ENCODE measurements at regions of chr6 and their contacts with region 1.

Region 1: GRCh38 chr6:30678964-30679726 is 6.3 kb upstream of the DHX16 start:
- DNase-seq: no peak
- ATAC-seq: peak; percentile 79
- H3K4me3 ChIP-seq: peak overlapping the region; percentile 100
- H3K27ac ChIP-seq: peak overlapping the region; percentile 65
- H3K4me1 ChIP-seq: peaks cover 8% of the 10 kb centered on the region
- H3K27me3 ChIP-seq: no peaks in the 10 kb centered on the region
- CTCF ChIP-seq: peak; percentile 97 to 98 (median 98); a peak in 5 of 6 replicates
- EP300 ChIP-seq: no peak
- POLR2A ChIP-seq: 0 out of 2 replicates have a peak, but pooled peaks have one; percentile 29
- RAD21 ChIP-seq: peak; percentile 97

Region 2: GRCh38 chr6:30711758-30712380 is 32.7 kb after region 1 on chr6:
- CTCF ChIA-PET with region 1: interaction called, 487 read pairs
- POLR2A ChIA-PET with region 1: interaction called, 200 read pairs
- RAD21 ChIA-PET with region 1: interaction called, 209 read pairs
- SMC1A ChIA-PET with region 1: interaction called, 265 read pairs
- in situ Hi-C with region 1: loop called (anchors 5 kb)
- intact Hi-C with region 1: loop called (anchors 1 kb)
- DNase-seq: no peak
- ATAC-seq: peak; percentile 79
- H3K4me3 ChIP-seq: peak overlapping the region; percentile 0; the same call in 1 of the 2 replicates
- H3K27ac ChIP-seq: peak overlapping the region; percentile 35
- H3K4me1 ChIP-seq: peaks cover 32% of the 10 kb centered on the region
- H3K27me3 ChIP-seq: no peaks in the 10 kb centered on the region
- CTCF ChIP-seq: 0 out of 6 replicates have a peak, but pooled peaks of 1 of the 3 experiments have one; percentile 9
- EP300 ChIP-seq: no peak
- POLR2A ChIP-seq: no peak
- RAD21 ChIP-seq: no peak

Region 3: GRCh38 chr6:30717042-30717844 is 38.1 kb after region 1 on chr6 and contains the start of gene MDC1:
- CTCF ChIA-PET with region 1: interaction called, 487 read pairs
- POLR2A ChIA-PET with region 1: interaction called, 200 read pairs
- RAD21 ChIA-PET with region 1: interaction called, 209 read pairs
- SMC1A ChIA-PET with region 1: interaction called, 265 read pairs
- in situ Hi-C with region 1: loop called (anchors 5 kb)
- intact Hi-C with region 1: loop called (anchors 1 kb)
- DNase-seq: peak; percentile 99
- ATAC-seq: peak; percentile 76
- H3K4me3 ChIP-seq: peak within 1 kb of the TSS; percentile 83
- H3K27ac ChIP-seq: peak within 1 kb of the TSS; percentile 98
- H3K4me1 ChIP-seq: peaks cover 16% of the 10 kb centered on the region
- H3K27me3 ChIP-seq: no peaks in the 10 kb centered on the region
- CTCF ChIP-seq: peak; percentile 8 to 29 (median 17); a peak in 3 of 6 replicates
- EP300 ChIP-seq: peak; percentile 39 to 52; a peak in 1 of 4 replicates
- POLR2A ChIP-seq: peak; percentile 80
- RAD21 ChIP-seq: no peak; the same call in 1 of the 2 replicates
- polyA plus RNA-seq, gene MDC1: 5.1 to 6.5 TPM

Region 4: DNA sequence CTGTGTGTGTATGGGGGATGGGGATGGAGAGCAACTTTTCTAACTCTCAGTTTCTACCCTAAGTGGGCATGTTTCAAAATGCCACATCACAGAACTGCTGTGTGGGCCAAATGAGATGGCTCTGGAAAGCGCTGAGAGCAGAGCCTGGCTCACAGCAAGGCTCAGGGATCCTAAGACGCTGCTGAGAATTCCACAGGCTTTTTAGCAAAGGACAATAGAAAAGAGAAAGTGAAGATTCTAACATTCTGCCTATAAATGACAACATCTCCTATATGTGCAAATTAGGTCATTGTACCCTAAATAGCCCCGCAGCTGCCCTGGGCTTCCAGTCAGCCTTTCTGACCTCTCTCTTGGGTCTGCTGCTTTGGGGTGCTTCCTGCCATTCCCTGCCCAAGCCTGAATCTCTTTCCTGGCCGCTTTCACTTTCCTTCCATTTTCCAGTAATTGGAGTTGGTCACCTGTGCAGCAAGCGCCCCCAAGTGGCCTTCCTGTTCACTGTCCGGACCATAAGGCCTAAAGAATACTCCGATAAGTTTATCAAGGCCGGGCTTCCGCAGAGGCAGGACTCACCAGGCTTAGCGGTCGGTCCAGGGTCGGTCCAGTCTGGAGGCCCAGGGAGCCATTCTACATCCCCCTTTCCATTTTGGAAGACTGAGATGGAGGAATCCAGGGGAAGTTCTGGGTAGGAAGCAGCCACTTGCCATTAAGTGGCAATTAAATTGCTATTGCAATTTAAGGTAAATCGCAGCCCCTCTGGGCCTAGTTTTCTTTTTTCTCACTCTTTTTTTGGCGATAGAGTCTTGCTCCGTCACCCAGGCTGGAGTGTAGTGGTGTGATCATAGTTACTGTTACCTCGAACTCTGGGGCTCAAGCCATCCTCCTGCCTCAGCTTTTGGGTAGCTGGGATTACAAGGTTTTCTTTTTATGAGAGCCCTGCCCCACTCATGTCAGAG is 198.6 kb after region 1 on chr6:
- CTCF ChIA-PET with region 1: interaction called, 10 read pairs
- POLR2A ChIA-PET with region 1: interaction called, 6 read pairs
- RAD21 ChIA-PET with region 1: interaction called, 7 read pairs
- SMC1A ChIA-PET with region 1: interaction called, 5 read pairs
- in situ Hi-C with region 1: no loop called
- intact Hi-C with region 1: loop called (anchors 5 kb)
- DNase-seq: peak; percentile 59
- ATAC-seq: peak; percentile 91
- H3K4me3 ChIP-seq: peak overlapping the region; percentile 61
- H3K27ac ChIP-seq: peak overlapping the region; percentile 68
- H3K4me1 ChIP-seq: peaks cover 21% of the 10 kb centered on the region
- H3K27me3 ChIP-seq: no peaks in the 10 kb centered on the region
- CTCF ChIP-seq: peak; percentile 91 to 95 (median 93); a peak in 5 of 6 replicates
- EP300 ChIP-seq: no peak
- POLR2A ChIP-seq: 0 out of 2 replicates have a peak, but pooled peaks have one; percentile 28
- RAD21 ChIP-seq: peak; percentile 95